ENCODE measurements at regions of chr11 and their contacts with region 1.

Region 1: DNA sequence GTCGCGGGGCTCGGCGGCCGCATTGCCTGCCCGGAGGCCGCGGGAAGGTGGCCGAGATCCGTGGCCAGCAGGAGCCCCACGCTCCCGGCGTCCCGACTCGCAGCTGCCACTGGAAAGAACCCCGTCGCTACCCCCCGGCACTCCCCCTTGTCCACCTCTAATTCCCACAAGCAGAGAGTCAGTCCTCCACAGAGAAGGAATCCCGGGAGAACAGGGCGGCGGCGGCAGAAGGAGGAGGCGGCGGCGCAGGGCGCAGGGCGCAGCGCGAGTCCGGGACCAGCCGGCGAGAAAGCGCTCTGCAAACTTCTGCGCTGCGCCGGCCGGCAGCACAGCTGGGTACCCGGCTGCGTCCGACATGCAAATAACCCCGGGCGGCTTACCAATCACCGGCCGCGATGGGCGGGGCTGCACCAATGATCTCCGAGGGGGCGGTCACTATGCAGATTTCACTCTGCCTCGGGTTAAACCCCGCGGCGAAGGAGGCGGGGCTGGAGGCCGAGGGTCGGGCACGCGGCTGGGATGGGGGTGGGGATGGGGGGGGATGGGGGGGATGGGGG is at the start of gene ABTB2:
- DNase-seq: peak; percentile 99
- H3K4me3 Mint-ChIP-seq: peak within 1 kb of the TSS; percentile 76
- H3K27ac Mint-ChIP-seq: peak within 1 kb of the TSS; percentile 69
- H3K4me1 Mint-ChIP-seq: peaks cover 16% of the 10 kb centered on the region
- H3K27me3 Mint-ChIP-seq: peaks cover 27% of the 10 kb centered on the region
- total RNA-seq, gene ABTB2: 3.1 to 3.7 TPM

Region 2: GRCh38 chr11:33857933-33858371 is 499.8 kb before region 1 on chr11:
- CTCF ChIA-PET with region 1: interaction called, 3 read pairs
- intact Hi-C with region 1: loop called (anchors 1 kb)
- DNase-seq: peak; percentile 88
- H3K4me3 Mint-ChIP-seq: no peak overlapping the region
- H3K27ac Mint-ChIP-seq: no peak overlapping the region
- H3K4me1 Mint-ChIP-seq: no peaks in the 10 kb centered on the region
- H3K27me3 Mint-ChIP-seq: peaks cover 29% of the 10 kb centered on the region

Region 3: DNA sequence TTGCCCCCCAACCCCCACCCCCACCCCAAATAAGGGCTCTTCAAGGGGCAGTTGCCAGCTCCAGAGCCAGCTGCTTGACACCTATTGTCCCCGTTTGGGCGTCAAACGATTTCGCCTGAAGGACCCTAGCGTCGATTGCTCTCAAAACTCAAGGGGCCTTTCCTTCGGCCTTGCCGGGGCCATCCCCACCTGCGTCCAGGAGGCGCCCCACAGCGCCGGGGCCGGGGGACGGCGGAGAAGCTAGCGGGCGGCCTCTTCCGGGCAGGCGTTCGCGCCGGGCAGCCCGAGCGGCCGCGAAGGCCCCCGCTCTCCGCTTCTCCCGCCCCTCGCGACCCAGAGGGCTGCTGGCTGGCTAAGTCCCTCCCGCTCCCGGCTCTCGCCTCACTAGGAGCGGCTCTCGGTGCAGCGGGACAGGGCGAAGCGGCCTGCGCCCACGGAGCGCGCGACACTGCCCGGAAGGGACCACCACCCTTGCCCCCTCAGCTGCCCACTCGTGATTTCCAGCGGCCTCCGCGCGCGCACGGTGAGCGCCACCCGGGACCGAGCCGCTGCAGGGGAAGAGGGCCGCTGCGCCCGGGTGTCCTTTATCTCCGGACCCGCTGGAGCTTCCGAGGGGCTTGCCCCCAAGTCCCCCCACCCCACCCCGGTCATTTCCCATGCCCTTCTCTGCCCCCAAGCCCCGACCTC is 306.3 kb before region 1 on chr11 and contains the start of gene CAPRIN1:
- CTCF ChIA-PET with region 1: no interaction called
- intact Hi-C with region 1: loop called (anchors 1 kb)
- DNase-seq: peak; percentile 86
- H3K4me3 Mint-ChIP-seq: peak within 1 kb of the TSS; percentile 96
- H3K27ac Mint-ChIP-seq: peak within 1 kb of the TSS; percentile 97
- H3K4me1 Mint-ChIP-seq: peaks cover 14% of the 10 kb centered on the region
- H3K27me3 Mint-ChIP-seq: no peaks in the 10 kb centered on the region
- total RNA-seq, gene CAPRIN1: 274 to 289 TPM

Region 4: GRCh38 chr11:34174412-34175041 is 183.3 kb before region 1 on chr11:
- CTCF ChIA-PET with region 1: interaction called, 71 read pairs
- intact Hi-C with region 1: loop called (anchors 1 kb)
- DNase-seq: peak; percentile 88
- H3K4me3 Mint-ChIP-seq: peak overlapping the region; percentile 41
- H3K27ac Mint-ChIP-seq: no peak overlapping the region
- H3K4me1 Mint-ChIP-seq: peaks cover 21% of the 10 kb centered on the region
- H3K27me3 Mint-ChIP-seq: no peaks in the 10 kb centered on the region

Region 5: GRCh38 chr11:34250732-34251639 is 106.8 kb before region 1 on chr11:
- CTCF ChIA-PET with region 1: interaction called, 3 read pairs
- intact Hi-C with region 1: loop called (anchors 1 kb)
- DNase-seq: peak; percentile 84
- H3K4me3 Mint-ChIP-seq: peak overlapping the region; percentile 20
- H3K27ac Mint-ChIP-seq: no peak overlapping the region
- H3K4me1 Mint-ChIP-seq: peaks cover 52% of the 10 kb centered on the region
- H3K27me3 Mint-ChIP-seq: peaks cover 12% of the 10 kb centered on the region

Region 6: DNA sequence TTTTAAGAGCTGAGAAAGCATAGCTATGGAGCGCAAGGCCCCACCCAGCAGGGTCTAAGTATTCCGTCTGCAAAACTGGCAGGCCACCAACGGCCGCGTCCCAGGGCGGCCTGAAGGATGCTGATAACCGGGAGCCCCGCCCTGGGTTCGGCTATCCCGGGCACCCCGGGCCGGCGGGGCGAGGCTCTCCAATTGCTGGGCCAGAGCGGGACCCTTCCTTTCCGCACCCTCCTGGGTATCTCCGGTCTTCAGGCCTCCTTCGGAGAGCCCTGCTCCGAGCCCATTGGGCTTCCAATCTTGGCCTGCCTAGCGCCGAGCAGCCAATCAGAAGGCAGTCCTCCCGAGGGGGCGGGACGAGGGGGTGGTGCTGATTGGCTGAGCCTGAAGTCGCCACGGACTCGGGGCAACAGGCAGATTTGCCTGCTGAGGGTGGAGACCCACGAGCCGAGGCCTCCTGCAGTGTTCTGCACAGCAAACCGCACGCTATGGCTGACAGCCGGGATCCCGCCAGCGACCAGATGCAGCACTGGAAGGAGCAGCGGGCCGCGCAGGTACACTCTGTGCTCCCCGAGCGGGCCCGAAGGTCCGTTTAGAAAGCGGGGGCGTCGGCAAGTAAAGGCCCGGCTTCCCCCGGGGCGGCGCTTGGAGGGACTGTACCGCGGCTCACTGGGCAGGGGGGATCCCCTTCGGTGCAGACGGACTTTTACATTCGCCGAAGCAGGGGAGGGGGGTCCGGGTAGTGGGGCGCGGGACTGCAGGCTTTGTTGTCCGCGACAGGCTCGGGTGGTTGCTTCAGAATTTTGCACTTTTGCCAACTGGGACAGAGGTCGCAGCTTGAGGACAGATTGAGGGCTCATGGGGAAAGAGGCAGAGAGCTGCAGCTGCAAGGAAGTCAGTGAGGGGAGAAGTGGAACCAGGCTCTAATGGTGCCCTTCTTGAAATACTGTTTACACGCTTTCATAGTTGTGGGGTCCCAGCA is 81.0 kb after region 1 on chr11 and contains the start of gene CAT:
- CTCF ChIA-PET with region 1: no interaction called
- intact Hi-C with region 1: loop called (anchors 1 kb)
- DNase-seq: peak; percentile 99
- H3K4me3 Mint-ChIP-seq: peak within 1 kb of the TSS; percentile 89
- H3K27ac Mint-ChIP-seq: peak within 1 kb of the TSS; percentile 85
- H3K4me1 Mint-ChIP-seq: peaks cover 29% of the 10 kb centered on the region
- H3K27me3 Mint-ChIP-seq: no peaks in the 10 kb centered on the region
- total RNA-seq, gene CAT: 28.3 to 29.1 TPM